ENCODE measurements at regions of chr12 and their contacts with region 1.

Region 1: DNA sequence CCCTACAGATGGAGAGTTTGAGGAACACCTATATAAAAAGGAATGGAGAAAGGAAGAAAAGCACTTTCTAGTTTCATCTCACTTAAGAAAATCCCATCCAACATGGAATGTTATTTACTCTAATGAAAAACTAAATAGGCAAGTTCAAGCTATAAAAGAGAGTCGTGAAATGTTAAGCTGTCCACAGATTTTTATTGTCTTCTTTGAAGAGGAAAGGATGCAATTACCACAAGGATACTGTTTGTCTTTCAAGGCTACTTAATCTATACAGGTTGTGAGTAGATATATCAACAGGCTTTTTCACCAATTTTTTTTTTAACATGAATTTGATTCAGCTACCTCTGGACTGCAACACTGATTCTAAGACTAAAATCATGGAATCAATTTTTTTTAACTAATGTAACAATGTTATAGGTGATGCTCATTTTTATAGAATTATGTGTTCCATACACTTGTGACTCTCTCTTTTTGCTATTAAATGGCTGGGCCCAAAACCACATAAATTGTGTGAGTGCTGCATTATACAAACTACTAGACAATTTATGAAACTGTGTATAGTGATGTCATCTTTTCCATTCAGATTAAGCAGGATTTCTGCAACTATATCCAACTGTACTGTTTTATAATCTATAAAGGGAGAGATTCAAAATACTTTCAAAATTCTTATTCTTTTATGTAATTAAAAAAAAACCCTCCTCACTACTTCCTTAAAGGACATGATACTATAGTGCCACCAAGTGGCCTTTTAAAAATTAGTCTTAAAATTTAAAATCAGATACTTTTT is 26.8 kb upstream of the BMAL2 start:
- DNase-seq: no peak
- ATAC-seq: peak; percentile 30

Region 2: DNA sequence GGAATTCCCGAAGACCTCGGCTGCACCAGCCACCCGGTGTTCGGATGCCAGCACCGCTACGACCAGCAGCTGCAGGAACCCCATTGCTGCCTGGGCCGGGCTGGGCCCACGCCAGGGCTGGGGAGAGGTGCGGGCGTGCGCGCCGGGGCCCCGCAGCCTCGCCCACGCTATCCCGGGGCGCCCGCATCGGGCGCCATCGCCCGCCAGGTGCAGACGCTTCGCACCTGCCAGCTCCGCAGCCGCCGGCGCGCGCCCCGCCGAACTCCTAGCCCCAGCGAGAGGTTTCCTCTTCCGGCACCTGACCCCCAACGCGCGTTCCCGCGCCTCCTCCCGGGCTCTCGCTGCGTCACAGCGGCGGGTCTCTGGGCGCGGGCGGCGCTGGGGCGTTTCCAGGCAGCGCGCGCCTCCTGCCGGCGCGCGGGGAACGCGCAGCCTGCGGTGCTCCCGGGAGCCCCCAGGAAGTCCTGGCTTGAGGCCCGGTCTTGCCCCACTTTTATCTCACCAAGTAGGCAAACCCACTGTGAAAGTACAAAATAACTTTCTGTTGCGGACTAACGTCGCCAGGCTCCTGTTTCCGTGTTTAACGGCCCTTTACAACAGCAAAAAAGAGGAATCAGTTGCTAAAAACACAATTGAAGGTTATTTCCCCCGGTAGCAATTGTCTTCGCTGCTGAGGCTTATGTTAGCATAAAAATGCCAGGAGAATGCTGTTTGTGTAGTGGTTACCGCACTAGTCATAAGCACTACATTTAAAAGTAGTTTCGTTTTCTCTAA is 291.6 kb before region 1 on chr12 and contains the start of gene TM7SF3:
- intact Hi-C with region 1: loop called in 1 of 2 experiments (anchors 10 kb)
- DNase-seq: peak; percentile 95 to 98
- ATAC-seq: peak; percentile 96
- total RNA-seq, gene TM7SF3: 45.2 to 48.3 TPM

Region 3: DNA sequence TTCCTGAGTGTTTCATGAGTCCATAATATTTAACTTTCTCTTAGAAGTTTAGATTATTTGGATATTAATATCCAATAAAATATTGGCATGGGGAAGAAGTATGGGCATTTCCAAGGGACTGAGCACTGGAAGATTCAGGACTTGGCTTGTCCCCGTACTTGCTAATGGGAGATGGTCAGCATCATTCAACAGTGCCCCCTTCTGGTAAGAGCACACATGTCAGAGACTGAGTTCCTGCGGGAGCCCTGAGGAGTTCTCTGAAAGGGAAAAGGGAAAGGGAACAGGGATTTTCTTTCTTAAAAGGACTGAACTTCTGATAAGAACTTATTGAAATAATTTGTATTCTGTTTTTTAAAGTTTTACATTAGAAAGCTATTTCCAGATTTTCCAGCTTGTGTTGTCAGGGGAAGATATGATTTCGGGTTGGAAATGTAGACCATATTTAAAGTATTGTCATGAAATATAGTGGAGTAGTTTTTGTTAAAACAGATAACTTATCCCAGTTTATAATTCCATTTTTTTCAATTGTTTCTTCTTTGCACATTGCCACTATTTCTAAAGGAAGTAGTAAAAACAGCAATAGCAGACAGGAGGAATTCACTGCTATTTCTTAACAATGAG is 163.7 kb before region 1 on chr12:
- intact Hi-C with region 1: loop called in 1 of 2 experiments (anchors 10 kb)
- DNase-seq: peak; percentile 47 to 63
- ATAC-seq: peak; percentile 87

Region 4: DNA sequence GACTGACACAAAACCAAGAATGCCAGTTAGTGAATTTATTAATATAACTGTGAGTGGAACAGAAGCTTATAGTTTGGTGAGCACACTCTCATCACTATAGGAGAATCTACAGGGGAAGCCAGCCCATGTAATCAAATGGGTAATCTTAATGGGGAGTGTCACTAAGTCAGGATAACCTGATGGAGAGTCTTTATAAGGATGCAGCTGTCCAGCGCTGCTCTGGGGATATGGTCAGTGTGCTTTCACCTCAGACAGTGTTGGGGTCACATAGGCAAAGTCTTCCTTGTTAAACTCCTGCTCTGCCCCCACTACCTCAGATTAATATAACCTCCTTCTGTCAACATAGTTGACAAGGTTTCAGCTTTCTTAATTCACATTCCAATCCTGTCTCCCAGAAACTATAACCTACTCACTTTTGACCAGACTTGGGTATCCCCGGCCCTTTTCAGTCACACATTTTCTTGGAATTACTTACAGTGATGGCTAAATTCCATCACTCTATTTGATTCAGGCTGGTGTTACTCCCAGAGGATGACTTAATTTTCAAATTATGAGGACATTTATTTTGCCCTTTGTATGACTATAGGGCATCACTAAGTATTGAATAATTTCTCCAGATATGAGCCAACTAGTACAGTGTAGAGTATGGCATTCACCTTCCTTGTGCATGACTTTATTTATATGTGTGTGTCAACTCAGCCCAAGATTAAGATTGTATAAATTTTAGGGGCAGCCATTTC is 48.6 kb before region 1 on chr12:
- intact Hi-C with region 1: loop called in 1 of 2 experiments (anchors 5 kb)
- DNase-seq: no peak
- ATAC-seq: no peak

Region 5: GRCh38 chr12:27523642-27524493 is 218.0 kb after region 1 on chr12 and contains the start of gene PPFIBP1:
- intact Hi-C with region 1: no loop called
- DNase-seq: peak; percentile 98
- ATAC-seq: peak; percentile 98
- total RNA-seq, gene PPFIBP1: 40.9 to 43.1 TPM

Measured in left colon (tissue), 2 donors.